Activated T-helper 2 cell treated with anti-CD3 and anti-CD28 coated beads, Interferon-gamma antibody, Interleukin-2, Interleukin-4, amounts not matched to agents 10 μg/mL and 5 μg/mL and 100 μg/mL, durations not matched to agents 14 hours and 24 hours and 36 hours (primary cell): ENCODE measurements at regions of chr3 and their contacts with region 1.

Region 1: GRCh38 chr3:69425261-69425660 is 39.4 kb upstream of the FRMD4B start:
- DNase-seq: peak; percentile 9
- H3K4me3 Mint-ChIP-seq: no peak overlapping the region
- H3K27ac Mint-ChIP-seq: no peak overlapping the region
- H3K4me1 Mint-ChIP-seq: peaks cover 7% of the 10 kb centered on the region
- H3K27me3 Mint-ChIP-seq: no peaks in the 10 kb centered on the region

Region 2: GRCh38 chr3:69120879-69121464 is 304.3 kb before region 1 on chr3:
- intact Hi-C with region 1: loop called (anchors 5 kb)
- DNase-seq: peak; percentile 69
- H3K4me3 Mint-ChIP-seq: no peak overlapping the region
- H3K27ac Mint-ChIP-seq: no peak overlapping the region
- H3K4me1 Mint-ChIP-seq: peaks cover 4% of the 10 kb centered on the region
- H3K27me3 Mint-ChIP-seq: peaks cover 5% of the 10 kb centered on the region

Region 3: DNA sequence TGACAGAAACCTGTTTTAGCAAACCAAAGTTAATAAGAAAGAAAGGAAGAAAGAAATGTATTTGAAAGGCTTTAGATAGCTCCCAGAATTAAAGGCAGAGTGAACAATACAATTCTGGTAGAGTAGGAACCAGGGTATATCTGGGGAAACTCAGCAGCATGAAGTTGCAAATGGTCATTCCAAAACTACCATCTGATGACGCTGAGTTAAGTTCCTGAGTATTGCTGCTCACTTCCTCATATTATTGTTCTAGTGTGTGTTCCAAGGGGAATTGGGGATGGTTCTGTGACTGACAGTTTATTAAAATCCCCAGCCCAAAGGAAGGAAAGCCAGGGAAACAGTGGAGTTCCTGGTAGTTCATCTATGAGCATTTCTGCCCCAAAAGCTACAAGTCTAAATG is 48.9 kb after region 1 on chr3:
- intact Hi-C with region 1: no loop called
- DNase-seq: no peak
- H3K4me3 Mint-ChIP-seq: no peak overlapping the region
- H3K27ac Mint-ChIP-seq: no peak overlapping the region
- H3K4me1 Mint-ChIP-seq: no peaks in the 10 kb centered on the region
- H3K27me3 Mint-ChIP-seq: peaks cover 4% of the 10 kb centered on the region